CD8-positive, alpha-beta memory T cell (primary cell): ENCODE measurements at regions of chr12 and their contacts with region 1.

Region 1: GRCh38 chr12:6195665-6196535 is 4.3 kb upstream of the CD9 start:
- DNase-seq: peak; percentile 50 to 79 (median 66)
- H3K4me3 ChIP-seq: no peak overlapping the region
- H3K4me3 Mint-ChIP-seq: no peak overlapping the region
- H3K27ac ChIP-seq: no peak overlapping the region
- H3K27ac Mint-ChIP-seq: no peak overlapping the region
- H3K4me1 ChIP-seq: peaks cover 6% of the 10 kb centered on the region
- H3K4me1 Mint-ChIP-seq: peaks cover 0 to 9% (median 2%) of the 10 kb centered on the region in 3 donors
- H3K27me3 ChIP-seq: peaks cover 6% of the 10 kb centered on the region
- H3K27me3 Mint-ChIP-seq: peaks cover 16 to 40% of the 10 kb centered on the region in 2 donors

Region 2: GRCh38 chr12:6104027-6104426 is 91.9 kb before region 1 on chr12:
- CTCF ChIA-PET with region 1: no interaction called
- POLR2A ChIA-PET with region 1: no interaction called
- DNase-seq: no peak
- H3K4me3 ChIP-seq: no peak overlapping the region
- H3K4me3 Mint-ChIP-seq: no peak overlapping the region
- H3K27ac ChIP-seq: no peak overlapping the region
- H3K27ac Mint-ChIP-seq: no peak overlapping the region
- H3K4me1 ChIP-seq: no peaks in the 10 kb centered on the region
- H3K4me1 Mint-ChIP-seq: no peaks in the 10 kb centered on the region
- H3K27me3 ChIP-seq: no peaks in the 10 kb centered on the region
- H3K27me3 Mint-ChIP-seq: peaks cover 0 to 3% of the 10 kb centered on the region in 2 donors

Region 3: DNA sequence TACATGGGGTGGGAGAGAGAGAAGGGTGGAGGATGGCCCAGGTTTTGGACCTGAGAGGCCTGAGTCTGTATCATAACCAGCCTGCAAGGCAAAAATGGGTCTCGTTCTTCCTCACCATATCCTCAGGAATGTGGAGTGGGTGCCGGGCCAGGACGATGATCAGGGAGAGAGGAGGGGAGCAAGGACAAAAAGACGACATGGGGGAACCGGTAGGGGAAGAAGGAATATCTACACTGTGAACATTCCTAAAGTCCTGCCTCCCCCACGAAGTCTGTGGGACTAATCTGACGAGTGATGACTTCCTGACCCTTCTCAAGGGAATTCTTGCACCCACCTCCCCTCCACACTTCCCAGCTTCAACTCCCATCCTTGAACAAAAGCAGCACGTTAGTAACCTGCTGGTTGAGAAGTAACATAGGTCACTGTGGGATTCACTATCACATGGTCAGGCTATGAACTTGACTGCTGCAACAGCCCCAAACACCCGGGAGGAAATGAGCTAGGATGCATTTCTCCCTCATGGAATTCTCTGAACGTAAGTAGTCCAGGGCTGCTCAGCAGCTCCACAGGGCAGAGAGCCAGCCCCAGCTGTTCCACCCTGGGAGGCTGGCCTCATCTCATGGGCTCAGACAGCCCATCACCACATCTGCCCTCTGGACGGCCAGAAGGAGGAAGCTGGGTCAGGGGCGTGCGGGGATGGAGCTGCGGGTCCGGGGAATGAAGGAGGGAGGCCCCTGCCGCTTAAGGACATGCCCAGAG is 34.6 kb before region 1 on chr12:
- CTCF ChIA-PET with region 1: no interaction called
- POLR2A ChIA-PET with region 1: no interaction called
- DNase-seq: no peak
- H3K4me3 ChIP-seq: no peak overlapping the region
- H3K4me3 Mint-ChIP-seq: no peak overlapping the region
- H3K27ac ChIP-seq: no peak overlapping the region
- H3K27ac Mint-ChIP-seq: no peak overlapping the region
- H3K4me1 ChIP-seq: no peaks in the 10 kb centered on the region
- H3K4me1 Mint-ChIP-seq: no peaks in the 10 kb centered on the region
- H3K27me3 ChIP-seq: no peaks in the 10 kb centered on the region
- H3K27me3 Mint-ChIP-seq: peaks cover 6 to 29% of the 10 kb centered on the region in 2 donors

Region 4: DNA sequence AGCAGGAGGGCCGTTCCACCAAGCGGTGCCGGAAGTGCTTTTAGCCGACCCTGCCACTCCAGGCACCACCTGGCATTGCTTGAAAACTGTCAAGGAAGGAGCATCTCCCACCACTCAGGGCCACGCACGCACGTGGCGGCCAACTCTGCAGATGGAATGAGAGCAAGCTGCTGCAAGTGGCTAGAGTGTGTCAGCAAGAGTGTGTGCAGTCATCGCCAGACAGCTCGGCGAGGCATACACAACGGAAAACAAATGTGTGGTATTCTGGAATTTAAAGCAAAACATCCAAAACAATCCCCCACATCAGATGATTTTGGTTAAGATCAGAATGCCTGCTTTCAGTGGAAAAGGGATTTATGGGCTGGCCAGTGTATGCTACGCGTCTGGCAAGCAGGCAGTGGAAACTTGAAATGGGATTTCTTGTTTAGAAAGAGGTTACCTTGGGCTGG is 15.5 kb after region 1 on chr12:
- CTCF ChIA-PET with region 1: interaction called, 18 read pairs
- POLR2A ChIA-PET with region 1: no interaction called
- DNase-seq: no peak
- H3K4me3 ChIP-seq: no peak overlapping the region
- H3K4me3 Mint-ChIP-seq: no peak overlapping the region
- H3K27ac ChIP-seq: no peak overlapping the region
- H3K27ac Mint-ChIP-seq: peak overlapping the region in 1 of 8 donors; percentile 79
- H3K4me1 ChIP-seq: no peaks in the 10 kb centered on the region
- H3K4me1 Mint-ChIP-seq: peaks cover 0 to 7% (median 0%) of the 10 kb centered on the region in 3 donors
- H3K27me3 ChIP-seq: no peaks in the 10 kb centered on the region
- H3K27me3 Mint-ChIP-seq: peaks cover 0 to 10% of the 10 kb centered on the region in 2 donors

Region 5: GRCh38 chr12:6230321-6231110 is 34.6 kb after region 1 on chr12:
- CTCF ChIA-PET with region 1: interaction called, 20 read pairs
- POLR2A ChIA-PET with region 1: interaction called, 4 read pairs
- DNase-seq: peak; percentile 61 to 88 (median 74)
- H3K4me3 ChIP-seq: peak overlapping the region; percentile 26
- H3K4me3 Mint-ChIP-seq: peak overlapping the region; percentile 6 to 86 (median 69)
- H3K27ac ChIP-seq: no peak overlapping the region
- H3K27ac Mint-ChIP-seq: peak overlapping the region; percentile 79 to 98 (median 94)
- H3K4me1 ChIP-seq: peaks cover 27% of the 10 kb centered on the region
- H3K4me1 Mint-ChIP-seq: peaks cover 23 to 34% (median 26%) of the 10 kb centered on the region in 3 donors
- H3K27me3 ChIP-seq: no peaks in the 10 kb centered on the region
- H3K27me3 Mint-ChIP-seq: peaks cover 0 to 2% of the 10 kb centered on the region in 2 donors

Region 6: GRCh38 chr12:6278439-6279255 is 82.7 kb after region 1 on chr12:
- CTCF ChIA-PET with region 1: interaction called, 139 read pairs
- POLR2A ChIA-PET with region 1: no interaction called
- DNase-seq: peak; percentile 78 to 87 (median 80)
- H3K4me3 ChIP-seq: no peak overlapping the region
- H3K4me3 Mint-ChIP-seq: peak overlapping the region; percentile 55 to 88 (median 75)
- H3K27ac ChIP-seq: no peak overlapping the region
- H3K27ac Mint-ChIP-seq: peak overlapping the region in 1 of 8 donors; percentile 50
- H3K4me1 ChIP-seq: peaks cover 4% of the 10 kb centered on the region
- H3K4me1 Mint-ChIP-seq: peaks cover 5 to 11% (median 7%) of the 10 kb centered on the region in 3 donors
- H3K27me3 ChIP-seq: no peaks in the 10 kb centered on the region
- H3K27me3 Mint-ChIP-seq: peaks cover 20 to 55% of the 10 kb centered on the region in 2 donors

Region 7: DNA sequence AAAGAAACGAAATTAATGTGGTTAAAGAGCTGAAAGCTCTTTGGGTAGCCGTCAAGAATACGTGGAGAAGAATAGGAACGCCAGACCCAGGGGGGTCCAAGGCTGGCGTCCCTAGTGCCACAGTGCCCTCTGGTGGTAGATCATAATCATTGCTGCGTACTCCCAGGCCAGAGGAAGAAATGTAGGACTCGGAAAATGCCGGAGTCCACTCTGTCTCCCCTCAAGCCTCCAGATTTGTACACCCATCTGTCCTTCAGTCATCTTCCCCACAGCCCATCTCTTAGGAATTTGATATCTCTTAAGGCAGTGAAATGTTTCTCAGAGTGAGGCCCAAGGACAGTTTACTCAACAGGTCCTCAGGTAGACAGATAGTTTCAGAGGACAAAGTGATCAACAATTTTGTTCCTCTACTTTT is 89.2 kb after region 1 on chr12:
- CTCF ChIA-PET with region 1: interaction called, 139 read pairs
- POLR2A ChIA-PET with region 1: interaction called, 4 read pairs
- DNase-seq: peak; percentile 42 to 70 (median 49)
- H3K4me3 ChIP-seq: no peak overlapping the region
- H3K4me3 Mint-ChIP-seq: no peak overlapping the region
- H3K27ac ChIP-seq: no peak overlapping the region
- H3K27ac Mint-ChIP-seq: peak overlapping the region in 3 of 8 donors; percentile 18 to 70 (median 51)
- H3K4me1 ChIP-seq: no peaks in the 10 kb centered on the region
- H3K4me1 Mint-ChIP-seq: peaks cover 2 to 5% (median 4%) of the 10 kb centered on the region in 3 donors
- H3K27me3 ChIP-seq: no peaks in the 10 kb centered on the region
- H3K27me3 Mint-ChIP-seq: peaks cover 9 to 23% of the 10 kb centered on the region in 2 donors

Region 8: GRCh38 chr12:6613776-6614512 is 418.0 kb after region 1 on chr12:
- CTCF ChIA-PET with region 1: no interaction called
- POLR2A ChIA-PET with region 1: no interaction called
- DNase-seq: peak; percentile 48 to 84 (median 55)
- H3K4me3 ChIP-seq: no peak overlapping the region
- H3K4me3 Mint-ChIP-seq: peak overlapping the region in 2 of 7 donors; percentile 36 to 72
- H3K27ac ChIP-seq: peak overlapping the region; percentile 67
- H3K27ac Mint-ChIP-seq: peak overlapping the region; percentile 63 to 93 (median 88)
- H3K4me1 ChIP-seq: peaks cover 24% of the 10 kb centered on the region
- H3K4me1 Mint-ChIP-seq: peaks cover 36 to 55% (median 43%) of the 10 kb centered on the region in 3 donors
- H3K27me3 ChIP-seq: no peaks in the 10 kb centered on the region
- H3K27me3 Mint-ChIP-seq: no peaks in the 10 kb centered on the region